Naive thymus-derived CD4-positive, alpha-beta T cell (primary cell): ENCODE measurements at regions of chr5 and their contacts with region 1.

Region 1: DNA sequence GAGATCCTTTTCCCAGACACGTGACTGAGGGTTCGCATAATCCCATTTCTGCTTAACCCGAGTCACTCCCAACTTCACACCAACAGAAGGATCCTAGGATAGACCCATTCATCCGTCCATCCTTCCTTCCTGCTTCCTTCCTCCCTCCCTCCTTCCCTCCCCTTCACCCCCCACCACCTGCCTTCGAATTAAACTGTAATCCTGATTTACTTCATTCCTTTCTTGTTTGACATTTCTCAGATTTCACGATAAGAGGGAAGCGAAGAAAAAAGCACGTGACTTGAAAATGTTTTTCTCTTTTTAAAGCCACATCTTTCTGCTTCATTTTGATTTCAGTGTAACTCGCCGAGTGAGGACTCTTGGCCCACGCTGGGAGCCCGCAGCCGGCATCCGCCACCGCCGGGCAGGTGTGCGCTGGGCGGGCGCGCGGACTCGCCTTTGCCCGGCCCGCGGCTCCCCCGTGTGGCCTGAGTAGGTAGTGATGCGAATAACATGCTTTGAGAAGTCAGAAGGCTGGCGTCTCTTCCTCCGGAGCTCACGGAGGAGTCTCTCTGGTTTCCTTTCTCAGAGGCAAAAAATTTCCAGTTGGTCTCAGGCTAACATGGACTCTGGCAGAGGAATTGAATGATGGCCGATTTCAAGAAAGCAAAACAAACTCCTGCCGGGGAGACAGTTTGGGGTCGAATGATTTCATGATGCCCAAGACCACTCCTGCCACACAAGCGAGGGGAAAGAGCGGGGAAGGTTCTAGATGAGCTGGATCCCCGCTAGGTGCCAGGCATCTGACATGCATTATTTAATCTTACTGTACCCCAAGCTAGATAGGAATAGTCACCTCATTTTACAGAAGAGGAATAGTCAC is 117.7 kb downstream of the SLC12A2 start:
- DNase-seq: peak; percentile 68 to 90 (median 84)
- ATAC-seq: peak; percentile 87
- H3K4me3 ChIP-seq: peak overlapping the region; percentile 15
- H3K4me3 Mint-ChIP-seq: peak overlapping the region; percentile 9 to 77 (median 62)
- H3K27ac ChIP-seq: no peak overlapping the region
- H3K27ac Mint-ChIP-seq: peak overlapping the region in 7 of 9 donors; percentile 29 to 88 (median 75)
- H3K4me1 ChIP-seq: peaks cover 0 to 23% of the 10 kb centered on the region in 2 donors
- H3K4me1 Mint-ChIP-seq: peaks cover 21 to 51% (median 44%) of the 10 kb centered on the region in 7 donors
- H3K27me3 ChIP-seq: no peaks in the 10 kb centered on the region
- H3K27me3 Mint-ChIP-seq: peaks cover 0 to 9% (median 1%) of the 10 kb centered on the region in 5 donors

Region 2: GRCh38 chr5:127564002-127564769 is 637.1 kb before region 1 on chr5:
- CTCF ChIA-PET with region 1: interaction called, 12 read pairs
- POLR2A ChIA-PET with region 1: no interaction called
- intact Hi-C with region 1: loop called (anchors 1 kb)
- DNase-seq: peak in 8 of 9 donors; percentile 21 to 61 (median 47)
- ATAC-seq: peak; percentile 79
- H3K4me3 ChIP-seq: no peak overlapping the region
- H3K4me3 Mint-ChIP-seq: no peak overlapping the region
- H3K27ac ChIP-seq: no peak overlapping the region
- H3K27ac Mint-ChIP-seq: no peak overlapping the region
- H3K4me1 ChIP-seq: no peaks in the 10 kb centered on the region
- H3K4me1 Mint-ChIP-seq: peaks cover 0 to 16% (median 0%) of the 10 kb centered on the region in 7 donors
- H3K27me3 ChIP-seq: no peaks in the 10 kb centered on the region
- H3K27me3 Mint-ChIP-seq: peaks cover 12 to 32% (median 20%) of the 10 kb centered on the region in 5 donors

Region 3: GRCh38 chr5:127757576-127757975 is 443.7 kb before region 1 on chr5:
- CTCF ChIA-PET with region 1: interaction called, 3 read pairs
- POLR2A ChIA-PET with region 1: no interaction called
- intact Hi-C with region 1: loop called in 1 of 2 experiments (anchors 1 kb)
- DNase-seq: peak in 1 of 9 donors; percentile 13
- ATAC-seq: peak; percentile 64
- H3K4me3 ChIP-seq: no peak overlapping the region
- H3K4me3 Mint-ChIP-seq: no peak overlapping the region
- H3K27ac ChIP-seq: no peak overlapping the region
- H3K27ac Mint-ChIP-seq: peak overlapping the region in 1 of 9 donors; percentile 2
- H3K4me1 ChIP-seq: no peaks in the 10 kb centered on the region
- H3K4me1 Mint-ChIP-seq: peaks cover 0 to 3% (median 0%) of the 10 kb centered on the region in 7 donors
- H3K27me3 ChIP-seq: no peaks in the 10 kb centered on the region
- H3K27me3 Mint-ChIP-seq: peaks cover 0 to 15% (median 0%) of the 10 kb centered on the region in 5 donors

Region 4: GRCh38 chr5:127909078-127909477 is 292.2 kb before region 1 on chr5:
- CTCF ChIA-PET with region 1: no interaction called
- POLR2A ChIA-PET with region 1: no interaction called
- intact Hi-C with region 1: loop called in 1 of 2 experiments (anchors 2 kb)
- DNase-seq: peak in 2 of 9 donors; percentile 1 to 12
- ATAC-seq: peak; percentile 61
- H3K4me3 ChIP-seq: no peak overlapping the region
- H3K4me3 Mint-ChIP-seq: no peak overlapping the region
- H3K27ac ChIP-seq: no peak overlapping the region
- H3K27ac Mint-ChIP-seq: no peak overlapping the region
- H3K4me1 ChIP-seq: no peaks in the 10 kb centered on the region
- H3K4me1 Mint-ChIP-seq: peaks cover 0 to 2% (median 0%) of the 10 kb centered on the region in 7 donors
- H3K27me3 ChIP-seq: no peaks in the 10 kb centered on the region
- H3K27me3 Mint-ChIP-seq: peaks cover 0 to 13% (median 7%) of the 10 kb centered on the region in 5 donors